ENCODE measurements at regions of chr2 and their contacts with region 1.

Region 1: DNA sequence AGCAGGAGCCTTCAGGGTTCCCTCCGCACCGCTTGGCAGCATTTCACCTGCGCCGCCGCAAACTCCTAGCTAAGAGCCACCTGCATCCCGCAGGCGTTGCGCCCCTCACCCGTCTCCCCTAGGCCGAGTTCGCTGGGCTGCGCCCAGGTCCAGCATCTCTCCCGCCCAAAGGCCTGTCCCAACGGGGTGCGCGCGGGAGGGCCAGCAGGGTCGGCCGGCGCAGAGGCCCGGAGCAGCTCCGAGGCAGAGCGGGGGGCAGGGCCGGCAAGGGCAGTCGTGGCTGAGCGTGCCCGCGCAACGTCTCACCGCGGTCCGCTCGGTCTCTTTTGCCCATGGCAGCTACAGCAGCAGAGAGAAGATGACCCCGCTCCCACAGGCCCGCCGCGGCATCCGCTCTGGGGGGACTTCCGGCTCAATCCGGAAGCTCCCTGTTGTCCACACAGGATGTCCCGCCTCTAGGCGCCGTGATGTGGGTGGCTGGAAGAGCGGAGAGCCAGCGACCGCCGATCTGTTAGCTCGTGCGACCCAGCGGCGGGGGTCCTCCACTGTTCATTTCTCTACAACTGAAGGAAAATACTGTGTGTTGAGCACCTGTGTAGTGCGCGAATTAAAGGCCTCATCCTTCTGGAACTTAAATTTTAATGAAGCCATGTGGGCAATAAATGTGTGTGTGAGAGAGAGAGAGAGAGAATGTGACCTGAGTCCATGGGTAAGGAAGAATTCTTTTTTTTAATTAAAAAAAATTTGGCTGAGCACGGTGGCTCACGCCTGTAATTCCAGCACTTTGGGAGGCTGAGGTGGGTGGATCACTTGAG is at the start of gene ERCC3:
- DNase-seq: peak; percentile 53 to 88
- H3K4me3 ChIP-seq: peak within 1 kb of the TSS; percentile 57 to 87 (median 78)
- H3K27ac ChIP-seq: peak within 1 kb of the TSS; percentile 66
- H3K4me1 ChIP-seq: peaks cover 0 to 4% (median 4%) of the 10 kb centered on the region in 4 experiments; a peak in 4 of 7 replicates
- H3K27me3 ChIP-seq: no peaks in the 10 kb centered on the region
- CTCF ChIP-seq: no peak
- EP300 ChIP-seq: no peak
- POLR2A ChIP-seq: peak; percentile 80 to 89
- RAD21 ChIP-seq: no peak; a peak in 1 of 4 replicates
- total RNA-seq, gene ERCC3: 48.9 and 52.3 TPM in 2 replicates

Region 2: DNA sequence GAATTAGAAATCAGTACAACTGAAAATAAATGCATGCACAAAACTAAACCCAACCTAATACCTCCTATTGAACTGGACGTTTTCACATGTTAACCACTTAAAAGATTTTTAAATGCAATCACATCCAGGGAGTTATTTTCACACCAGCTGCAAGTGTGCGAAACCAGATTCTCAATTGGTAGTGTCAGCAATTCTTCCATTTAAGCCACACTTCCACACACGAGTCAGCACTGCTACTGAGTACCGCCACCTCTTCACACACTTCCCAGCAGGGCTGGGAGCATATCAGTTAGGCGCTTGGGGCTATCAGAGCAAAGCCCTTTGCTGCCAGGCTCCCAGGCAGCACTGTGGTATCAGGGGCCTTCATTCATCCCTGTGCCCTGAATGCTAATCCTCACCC is 14.2 kb before region 1 on chr2:
- CTCF ChIA-PET with region 1: interaction called, 4 read pairs
- POLR2A ChIA-PET with region 1: interaction called, 14 read pairs
- DNase-seq: no peak
- H3K4me3 ChIP-seq: no peak overlapping the region
- H3K27ac ChIP-seq: no peak overlapping the region
- H3K4me1 ChIP-seq: no peaks in the 10 kb centered on the region
- H3K27me3 ChIP-seq: no peaks in the 10 kb centered on the region
- CTCF ChIP-seq: no peak
- EP300 ChIP-seq: no peak
- POLR2A ChIP-seq: no peak
- RAD21 ChIP-seq: no peak

Region 3: GRCh38 chr2:127576433-127577207 is 282.7 kb after region 1 on chr2:
- CTCF ChIA-PET with region 1: no interaction called
- POLR2A ChIA-PET with region 1: no interaction called
- DNase-seq: peak in 1 of 2 experiments; percentile 45
- H3K4me3 ChIP-seq: no peak overlapping the region
- H3K27ac ChIP-seq: no peak overlapping the region
- H3K4me1 ChIP-seq: no peaks in the 10 kb centered on the region; a peak in 1 of 7 replicates
- H3K27me3 ChIP-seq: no peaks in the 10 kb centered on the region; a peak in 1 of 7 replicates
- CTCF ChIP-seq: no peak
- EP300 ChIP-seq: no peak
- POLR2A ChIP-seq: no peak
- RAD21 ChIP-seq: no peak

Measured in H1 (cell line).